K562 (cell line): ENCODE measurements at regions of chr10 and their contacts with region 1.

Region 1: DNA sequence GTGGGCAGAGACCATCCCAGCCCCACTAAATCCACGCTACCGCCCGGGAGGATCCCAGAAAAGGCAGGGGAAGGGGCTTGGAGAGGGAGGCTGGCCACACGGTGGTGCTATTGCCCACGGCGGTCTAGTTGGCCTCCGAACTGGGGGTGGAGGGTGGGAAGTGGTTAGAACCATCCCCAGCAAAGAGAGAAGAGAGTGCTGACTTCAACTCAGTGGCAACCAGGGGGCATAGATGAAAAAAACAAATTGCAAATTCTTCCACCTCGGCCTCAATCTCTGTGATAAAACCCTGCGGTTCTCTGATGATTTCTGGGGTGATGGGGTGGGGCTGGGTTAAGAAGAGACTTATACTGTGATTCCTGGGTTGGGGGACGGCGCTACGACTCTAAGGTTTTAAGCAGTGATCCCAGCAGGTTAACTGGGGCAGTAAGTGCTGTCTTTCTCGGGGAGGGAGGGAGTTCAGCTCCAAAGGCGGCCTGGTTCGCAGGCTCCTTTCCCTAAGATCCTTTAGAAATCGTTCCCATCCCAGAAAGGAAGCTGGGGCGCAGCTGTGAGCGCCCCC is 154.5 kb upstream of the LYZL2 start:
- DNase-seq: peak; percentile 65 to 83 (median 78)
- ATAC-seq: peak; percentile 94
- H3K4me3 ChIP-seq: no peak overlapping the region
- H3K27ac ChIP-seq: no peak overlapping the region
- H3K4me1 ChIP-seq: peaks cover 0 to 7% of the 10 kb centered on the region in 2 experiments; a peak in 1 of 5 replicates
- H3K27me3 ChIP-seq: peaks cover 5 to 44% of the 10 kb centered on the region in 2 experiments; a peak in 3 of 5 replicates
- CTCF ChIP-seq: peak; percentile 79 to 85 (median 82)
- EP300 ChIP-seq: no peak
- POLR2A ChIP-seq: no peak
- RAD21 ChIP-seq: peak; percentile 77 to 85

Region 2: DNA sequence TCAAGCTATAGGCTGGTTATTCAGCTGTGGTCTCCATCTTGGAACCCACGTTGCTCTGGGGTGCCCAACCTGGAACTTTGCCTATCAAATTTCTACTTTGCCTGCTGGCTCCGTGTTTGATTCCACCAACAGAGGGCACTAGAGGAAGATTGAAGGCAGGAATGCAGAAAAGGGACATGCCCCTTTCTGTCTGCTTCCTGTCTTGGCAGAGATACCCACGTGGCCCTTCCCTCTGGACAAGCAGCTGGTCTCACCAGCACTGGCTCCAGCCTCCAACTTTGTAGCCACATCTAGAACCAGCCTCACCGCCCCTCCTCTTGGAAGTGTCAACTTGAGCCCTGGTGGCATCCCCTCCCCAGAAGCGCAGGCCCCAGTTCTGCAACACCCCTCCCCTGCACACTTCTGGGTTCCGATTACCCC is 299.8 kb after region 1 on chr10:
- CTCF ChIA-PET with region 1: no interaction called
- POLR2A ChIA-PET with region 1: no interaction called
- in situ Hi-C with region 1: no loop called
- intact Hi-C with region 1: loop called (anchors 10 kb)
- DNase-seq: peak; percentile 21 to 47 (median 29)
- ATAC-seq: peak; percentile 73
- H3K4me3 ChIP-seq: no peak overlapping the region
- H3K27ac ChIP-seq: no peak overlapping the region
- H3K4me1 ChIP-seq: no peaks in the 10 kb centered on the region
- H3K27me3 ChIP-seq: no peaks in the 10 kb centered on the region; a peak in 1 of 5 replicates
- CTCF ChIP-seq: peak; percentile 52 to 67 (median 54)
- EP300 ChIP-seq: no peak
- POLR2A ChIP-seq: no peak
- RAD21 ChIP-seq: peak; percentile 15 to 69; a peak in 2 of 4 replicates

Region 3: DNA sequence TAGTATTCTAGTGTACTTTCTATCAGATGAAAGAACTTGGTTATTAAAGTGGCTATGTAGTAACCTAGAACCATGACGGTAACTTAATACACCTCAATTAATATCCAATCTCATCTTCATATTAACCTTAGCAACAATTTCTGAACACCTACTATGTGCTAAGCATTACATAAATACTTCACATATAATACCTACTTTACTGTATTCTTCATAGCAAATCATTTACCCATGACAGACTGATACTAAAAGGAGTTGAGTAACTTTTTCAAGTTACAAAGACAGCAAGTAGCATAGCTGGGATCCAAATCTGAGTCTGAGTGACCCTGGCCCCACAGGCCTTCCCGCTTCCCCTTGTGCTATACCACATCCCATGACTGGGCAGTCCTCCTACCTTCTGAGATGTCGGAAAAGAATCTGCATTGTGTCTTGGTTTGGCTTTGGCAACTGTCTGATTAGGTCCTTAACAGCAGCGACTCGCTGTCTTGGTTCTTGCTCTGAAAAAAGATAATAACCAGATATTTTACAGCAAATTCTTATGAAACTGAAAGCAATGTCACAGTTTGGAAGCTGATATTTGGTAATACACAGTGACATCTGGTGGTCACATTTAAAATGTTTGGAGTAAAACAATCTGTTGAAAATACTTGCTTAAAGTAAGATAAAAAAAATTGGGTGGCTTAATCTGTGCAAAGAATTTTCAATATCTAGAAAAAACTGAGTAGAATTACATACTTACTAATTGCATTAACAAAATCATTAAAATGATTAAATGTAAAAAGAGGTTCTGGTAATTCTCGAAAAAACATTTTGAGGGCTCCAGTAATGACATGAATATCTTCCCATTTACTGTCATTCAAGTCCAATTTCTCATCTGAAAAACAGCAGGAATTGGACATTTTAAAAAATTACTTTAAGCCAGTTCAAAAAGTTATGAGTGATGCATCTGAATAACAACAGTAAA is 1024.5 kb after region 1 on chr10:
- CTCF ChIA-PET with region 1: interaction called, 8 read pairs
- POLR2A ChIA-PET with region 1: no interaction called
- in situ Hi-C with region 1: no loop called
- intact Hi-C with region 1: loop called (anchors 10 kb)
- DNase-seq: peak; percentile 5 to 56 (median 10)
- ATAC-seq: peak; percentile 85
- H3K4me3 ChIP-seq: no peak overlapping the region
- H3K27ac ChIP-seq: no peak overlapping the region; the same call in 2 of the 3 replicates
- H3K4me1 ChIP-seq: no peaks in the 10 kb centered on the region
- H3K27me3 ChIP-seq: no peaks in the 10 kb centered on the region
- CTCF ChIP-seq: peak; percentile 32 to 54 (median 43); a peak in 4 of 6 replicates
- EP300 ChIP-seq: no peak
- POLR2A ChIP-seq: no peak
- RAD21 ChIP-seq: peak; percentile 69 to 75